A673 (cell line): ENCODE measurements at regions of chr7 and their contacts with region 1.

Region 1: GRCh38 chr7:150778738-150779301 is 21.3 kb downstream of the TMEM176B start:
- DNase-seq: peak; percentile 88
- H3K4me3 ChIP-seq: no peak overlapping the region
- H3K27ac ChIP-seq: no peak overlapping the region
- H3K4me1 ChIP-seq: peaks cover 13% of the 10 kb centered on the region
- H3K27me3 ChIP-seq: no peaks in the 10 kb centered on the region
- CTCF ChIP-seq: peak; percentile 91

Region 2: DNA sequence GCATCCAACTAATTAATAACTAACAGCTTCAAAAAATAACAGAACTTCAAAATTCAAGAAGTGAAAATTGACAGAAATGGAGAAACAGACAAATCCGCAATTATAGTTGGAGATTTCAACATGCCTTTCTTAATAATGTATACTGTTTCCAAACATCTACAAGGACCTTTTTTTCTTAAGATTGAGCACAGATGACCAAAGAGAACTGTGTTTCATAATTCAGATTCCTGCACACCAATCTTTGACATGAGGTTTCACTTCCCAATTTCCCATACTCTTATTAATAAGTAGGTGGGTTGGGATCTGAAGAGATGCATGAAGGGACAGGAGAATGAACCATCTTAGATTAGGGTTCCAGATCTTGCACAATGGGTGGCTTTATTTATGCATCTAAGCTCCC is 289.0 kb before region 1 on chr7:
- CTCF ChIA-PET with region 1: no interaction called
- POLR2A ChIA-PET with region 1: no interaction called
- intact Hi-C with region 1: no loop called
- DNase-seq: no peak
- H3K4me3 ChIP-seq: no peak overlapping the region
- H3K27ac ChIP-seq: no peak overlapping the region
- H3K4me1 ChIP-seq: no peaks in the 10 kb centered on the region
- H3K27me3 ChIP-seq: no peaks in the 10 kb centered on the region
- CTCF ChIP-seq: no peak

Region 3: GRCh38 chr7:150806863-150807262 is 28.0 kb after region 1 on chr7:
- CTCF ChIA-PET with region 1: no interaction called
- POLR2A ChIA-PET with region 1: no interaction called
- intact Hi-C with region 1: loop called (anchors 2 kb)
- DNase-seq: no peak
- H3K4me3 ChIP-seq: no peak overlapping the region
- H3K27ac ChIP-seq: no peak overlapping the region
- H3K4me1 ChIP-seq: peaks cover 13% of the 10 kb centered on the region
- H3K27me3 ChIP-seq: no peaks in the 10 kb centered on the region
- CTCF ChIP-seq: peak; percentile 36; the same call in 1 of the 2 replicates

Region 4: GRCh38 chr7:150852371-150852920 is 73.6 kb after region 1 on chr7 and contains the start of gene AOC1:
- CTCF ChIA-PET with region 1: no interaction called
- POLR2A ChIA-PET with region 1: no interaction called
- intact Hi-C with region 1: no loop called
- DNase-seq: no peak
- H3K4me3 ChIP-seq: no peak within 1 kb of the TSS
- H3K27ac ChIP-seq: no peak within 1 kb of the TSS
- H3K4me1 ChIP-seq: no peaks in the 10 kb centered on the region
- H3K27me3 ChIP-seq: no peaks in the 10 kb centered on the region
- CTCF ChIP-seq: no peak
- total RNA-seq, gene AOC1: not detected in 2 replicates

Region 5: DNA sequence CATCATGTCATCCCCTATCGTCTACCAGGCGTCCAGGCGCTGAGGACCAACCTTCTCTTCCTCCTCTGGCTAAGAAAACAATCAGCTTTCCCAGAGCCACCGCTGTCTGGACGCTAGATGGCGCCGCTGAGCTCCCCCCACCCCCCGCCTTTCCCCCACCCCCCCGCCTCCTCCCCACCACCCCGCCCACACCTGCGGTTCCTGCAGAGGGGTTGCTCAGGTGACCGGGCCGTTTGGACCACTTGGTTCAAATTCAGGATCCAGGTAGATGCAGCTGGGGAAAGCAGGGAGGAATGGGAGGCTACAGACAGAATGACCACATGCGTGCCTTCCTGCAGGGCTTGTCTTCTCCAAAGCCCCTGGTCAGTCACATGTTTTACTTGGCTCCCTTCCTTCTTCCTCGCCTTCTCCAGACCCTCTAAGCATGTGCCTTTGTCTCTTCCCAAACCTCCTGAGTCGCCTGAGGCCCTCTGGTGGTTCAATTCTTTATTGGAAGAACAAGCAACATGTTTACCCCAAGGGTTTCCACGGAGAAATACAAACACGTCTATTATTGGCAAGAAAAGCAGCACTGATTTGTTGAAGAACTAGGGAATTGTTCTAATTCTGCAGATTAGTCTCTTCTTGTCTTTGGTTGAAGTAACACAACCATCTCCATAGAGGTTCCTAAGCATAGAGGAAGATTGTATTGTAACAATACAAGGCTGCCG is 98.2 kb after region 1 on chr7:
- CTCF ChIA-PET with region 1: interaction called, 4 read pairs
- POLR2A ChIA-PET with region 1: no interaction called
- intact Hi-C with region 1: loop called (anchors 1 kb)
- DNase-seq: peak; percentile 94
- H3K4me3 ChIP-seq: no peak overlapping the region
- H3K27ac ChIP-seq: no peak overlapping the region
- H3K4me1 ChIP-seq: peaks cover 13% of the 10 kb centered on the region
- H3K27me3 ChIP-seq: peaks cover 1% of the 10 kb centered on the region
- CTCF ChIP-seq: peak; percentile 70

Region 6: GRCh38 chr7:150988230-150989226 is 209.7 kb after region 1 on chr7:
- CTCF ChIA-PET with region 1: no interaction called
- POLR2A ChIA-PET with region 1: no interaction called
- intact Hi-C with region 1: loop called (anchors 1 kb)
- DNase-seq: peak; percentile 81
- H3K4me3 ChIP-seq: no peak overlapping the region
- H3K27ac ChIP-seq: no peak overlapping the region
- H3K4me1 ChIP-seq: no peaks in the 10 kb centered on the region
- H3K27me3 ChIP-seq: no peaks in the 10 kb centered on the region
- CTCF ChIP-seq: peak; percentile 89